Gastrocnemius medialis (tissue), 4 donors: ENCODE measurements at regions of chr6 and their contacts with region 1.

Region 1: GRCh38 chr6:44265007-44265721 is at the start of gene NFKBIE:
- DNase-seq: peak; percentile 89 to 90
- ATAC-seq: peak; percentile 78 to 82
- H3K4me3 ChIP-seq: peak within 1 kb of the TSS; percentile 69 to 88 (median 72)
- H3K27ac ChIP-seq: peak within 1 kb of the TSS; percentile 65 to 79 (median 70)
- H3K4me1 ChIP-seq: peaks cover 20 to 23% of the 10 kb centered on the region in 2 donors
- H3K27me3 ChIP-seq: peaks cover 14 to 21% (median 17%) of the 10 kb centered on the region in 3 donors
- CTCF ChIP-seq: peak in 4 of 5 experiments; percentile 5 to 28 (median 20)
- POLR2A ChIP-seq: peak; percentile 80 to 82
- total RNA-seq, gene NFKBIE: 4.1 to 11.1 (median 10.0) TPM

Region 2: DNA sequence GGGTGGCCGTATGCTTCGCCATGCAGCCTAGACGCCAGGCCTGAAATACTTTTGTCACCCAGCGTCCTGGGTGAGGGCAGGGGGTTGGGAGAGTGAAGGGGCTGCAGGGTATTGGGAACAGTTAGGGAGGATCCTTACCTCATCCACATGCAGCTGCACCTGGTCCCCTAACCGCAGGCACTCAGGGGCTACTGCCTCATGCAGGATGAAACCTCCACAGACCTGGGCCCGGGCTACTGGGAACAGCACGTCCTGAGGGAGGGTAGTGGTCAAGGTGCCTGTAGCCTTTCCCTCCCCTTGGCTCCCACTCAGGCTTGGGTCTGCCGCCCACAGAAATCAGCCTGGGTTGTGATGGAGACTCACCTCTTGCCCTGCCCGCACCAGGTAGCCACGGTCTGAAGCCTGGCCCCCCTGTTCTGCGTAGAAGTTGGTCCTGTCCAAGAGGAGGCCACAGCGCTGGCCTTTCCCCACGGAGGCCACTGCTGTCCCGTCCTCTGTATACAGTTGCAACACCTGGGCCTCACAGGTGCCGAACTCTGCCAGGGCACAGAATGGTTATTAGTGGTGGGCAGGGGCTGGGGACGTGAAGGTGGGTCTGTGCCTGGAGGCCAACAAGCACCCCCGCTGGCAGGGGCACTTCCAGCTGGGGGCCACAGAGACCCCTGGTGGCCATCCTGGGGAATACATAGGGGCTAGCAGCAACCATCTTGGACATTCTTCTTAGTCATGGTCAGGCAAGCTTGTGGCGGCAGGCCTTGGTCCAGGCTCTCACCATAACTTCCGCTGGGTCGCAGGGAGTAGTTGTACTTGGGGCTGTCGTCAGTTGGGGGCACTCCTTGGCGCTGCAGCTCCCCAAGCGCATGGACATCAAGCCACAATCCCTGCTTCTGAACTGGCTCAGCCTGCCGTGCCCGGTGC is 39.4 kb after region 1 on chr6:
- in situ Hi-C with region 1: no loop called
- intact Hi-C with region 1: loop called (anchors 2 kb)
- DNase-seq: no peak
- ATAC-seq: peak in 1 of 2 donors; percentile 49
- H3K4me3 ChIP-seq: no peak overlapping the region
- H3K27ac ChIP-seq: no peak overlapping the region
- H3K4me1 ChIP-seq: no peaks in the 10 kb centered on the region
- H3K27me3 ChIP-seq: no peaks in the 10 kb centered on the region
- CTCF ChIP-seq: peak; percentile 26 to 64 (median 54)
- POLR2A ChIP-seq: no peak

Region 3: GRCh38 chr6:44338228-44339122 is 73.3 kb after region 1 on chr6:
- in situ Hi-C with region 1: loop called in 1 of 4 experiments (anchors 5 kb)
- intact Hi-C with region 1: loop called (anchors 1 kb)
- DNase-seq: peak; percentile 13 to 40
- ATAC-seq: peak; percentile 75 to 93
- H3K4me3 ChIP-seq: no peak overlapping the region
- H3K27ac ChIP-seq: no peak overlapping the region
- H3K4me1 ChIP-seq: no peaks in the 10 kb centered on the region
- H3K27me3 ChIP-seq: peaks cover 12 to 20% (median 16%) of the 10 kb centered on the region in 3 donors
- CTCF ChIP-seq: peak; percentile 37 to 73 (median 68)
- POLR2A ChIP-seq: no peak